Calu3 (cell line): ENCODE measurements at regions of chr3 and their contacts with region 1.

Region 1: DNA sequence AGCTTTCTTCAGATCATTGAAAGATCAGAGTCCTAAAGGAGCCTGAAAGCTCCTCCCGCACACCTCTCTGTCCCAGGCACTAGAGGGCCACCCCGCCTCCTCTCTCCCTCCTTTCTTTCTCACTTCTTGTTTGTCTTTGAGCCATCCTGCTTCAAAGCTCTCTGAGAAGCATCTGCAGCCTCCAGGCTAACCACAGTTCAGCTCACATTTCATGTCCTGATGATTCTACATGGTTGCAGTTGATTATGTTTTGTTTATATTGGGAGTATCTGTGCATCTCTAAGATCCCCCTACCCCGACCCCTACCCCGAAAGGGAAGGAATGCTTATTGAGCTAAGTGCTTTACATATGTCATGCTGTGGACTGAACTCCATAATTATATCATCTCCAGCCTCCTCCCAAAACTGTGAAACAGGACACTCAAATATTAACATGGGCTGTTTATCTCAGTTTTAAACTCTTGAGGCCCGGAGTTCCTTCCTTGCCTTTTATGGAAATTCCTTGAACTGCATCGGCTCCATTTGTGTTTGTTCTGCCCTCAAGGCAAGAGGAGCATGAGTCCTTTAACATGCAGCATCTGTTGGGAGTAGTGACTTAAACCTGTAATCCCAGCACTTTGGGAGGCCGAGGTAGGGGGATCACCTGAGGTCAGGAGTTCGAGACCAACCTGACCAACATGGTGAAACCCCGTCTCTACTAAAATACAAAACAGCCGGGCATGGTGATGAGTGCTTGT is 30.9 kb downstream of the MGLL start:
- DNase-seq: peak; percentile 75
- H3K4me3 Mint-ChIP-seq: no peak overlapping the region
- H3K27ac Mint-ChIP-seq: no peak overlapping the region
- H3K4me1 Mint-ChIP-seq: peaks cover 29% of the 10 kb centered on the region
- H3K27me3 Mint-ChIP-seq: no peaks in the 10 kb centered on the region
- CTCF ChIP-seq: no peak

Region 2: GRCh38 chr3:127208483-127209100 is 582.8 kb before region 1 on chr3:
- CTCF ChIA-PET with region 1: no interaction called
- intact Hi-C with region 1: no loop called
- DNase-seq: no peak
- H3K4me3 Mint-ChIP-seq: no peak overlapping the region
- H3K27ac Mint-ChIP-seq: no peak overlapping the region
- H3K4me1 Mint-ChIP-seq: no peaks in the 10 kb centered on the region
- H3K27me3 Mint-ChIP-seq: peaks cover 94% of the 10 kb centered on the region
- CTCF ChIP-seq: no peak

Region 3: GRCh38 chr3:127637546-127637945 is 153.8 kb before region 1 on chr3:
- CTCF ChIA-PET with region 1: no interaction called
- intact Hi-C with region 1: no loop called
- DNase-seq: no peak
- H3K4me3 Mint-ChIP-seq: no peak overlapping the region
- H3K27ac Mint-ChIP-seq: no peak overlapping the region
- H3K4me1 Mint-ChIP-seq: no peaks in the 10 kb centered on the region
- H3K27me3 Mint-ChIP-seq: no peaks in the 10 kb centered on the region
- CTCF ChIP-seq: no peak

Region 4: GRCh38 chr3:127817396-127817841 is 26.0 kb after region 1 on chr3:
- CTCF ChIA-PET with region 1: interaction called, 17 read pairs
- intact Hi-C with region 1: no loop called
- DNase-seq: peak; percentile 77
- H3K4me3 Mint-ChIP-seq: peak overlapping the region; percentile 39
- H3K27ac Mint-ChIP-seq: peak overlapping the region; percentile 84
- H3K4me1 Mint-ChIP-seq: peaks cover 83% of the 10 kb centered on the region
- H3K27me3 Mint-ChIP-seq: no peaks in the 10 kb centered on the region
- CTCF ChIP-seq: no peak

Region 5: GRCh38 chr3:127822698-127823425 is 31.5 kb after region 1 on chr3:
- CTCF ChIA-PET with region 1: interaction called, 17 read pairs
- intact Hi-C with region 1: no loop called
- DNase-seq: peak; percentile 52
- H3K4me3 Mint-ChIP-seq: peak overlapping the region; percentile 85
- H3K27ac Mint-ChIP-seq: peak overlapping the region; percentile 94
- H3K4me1 Mint-ChIP-seq: peaks cover 62% of the 10 kb centered on the region
- H3K27me3 Mint-ChIP-seq: peaks cover 13% of the 10 kb centered on the region
- CTCF ChIP-seq: no peak

Region 6: GRCh38 chr3:127984241-127984975 is 193.0 kb after region 1 on chr3:
- CTCF ChIA-PET with region 1: no interaction called
- intact Hi-C with region 1: no loop called
- DNase-seq: no peak
- H3K4me3 Mint-ChIP-seq: no peak overlapping the region
- H3K27ac Mint-ChIP-seq: no peak overlapping the region
- H3K4me1 Mint-ChIP-seq: no peaks in the 10 kb centered on the region
- H3K27me3 Mint-ChIP-seq: peaks cover 53% of the 10 kb centered on the region
- CTCF ChIP-seq: no peak

Region 7: DNA sequence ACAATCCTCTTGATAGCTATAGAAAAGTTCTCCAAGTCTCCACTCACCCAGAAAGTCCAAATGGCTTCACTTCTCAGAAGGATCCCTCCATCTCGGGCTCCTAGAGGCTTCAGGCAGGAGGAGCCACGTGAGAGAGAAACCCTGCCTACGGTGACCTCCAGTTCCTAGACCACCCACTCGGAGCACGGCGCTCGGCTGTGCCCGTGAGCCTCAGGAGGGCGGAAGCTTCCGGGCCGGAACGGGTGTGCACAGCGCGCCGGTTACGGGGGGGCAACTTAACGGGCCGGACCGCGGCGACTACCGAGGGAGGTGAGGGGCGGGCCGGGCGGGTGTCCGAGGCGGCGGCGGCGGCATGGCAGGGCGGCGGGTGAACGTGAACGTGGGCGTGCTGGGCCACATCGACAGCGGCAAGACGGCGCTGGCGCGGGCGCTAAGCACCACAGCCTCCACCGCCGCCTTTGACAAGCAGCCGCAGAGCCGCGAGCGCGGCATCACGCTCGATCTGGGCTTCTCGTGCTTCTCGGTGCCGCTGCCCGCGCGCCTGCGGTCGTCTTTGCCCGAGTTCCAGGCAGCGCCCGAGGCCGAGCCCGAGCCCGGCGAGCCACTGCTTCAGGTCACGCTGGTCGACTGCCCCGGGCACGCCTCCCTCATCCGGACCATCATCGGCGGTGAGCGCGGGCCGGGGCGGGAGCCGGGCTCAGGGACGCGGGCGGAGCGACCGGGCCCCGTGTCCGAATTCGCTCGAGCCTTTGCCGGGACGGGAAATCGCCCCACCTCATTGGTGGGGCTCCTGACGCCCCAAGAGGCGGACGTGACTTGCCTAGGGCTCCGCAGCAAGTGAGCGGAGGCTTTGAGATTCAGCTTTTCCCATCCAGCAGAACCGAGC is 362.0 kb after region 1 on chr3 and contains the start of gene EEFSEC:
- CTCF ChIA-PET with region 1: no interaction called
- intact Hi-C with region 1: no loop called
- DNase-seq: peak; percentile 97
- H3K4me3 Mint-ChIP-seq: peak within 1 kb of the TSS; percentile 88
- H3K27ac Mint-ChIP-seq: peak within 1 kb of the TSS; percentile 85
- H3K4me1 Mint-ChIP-seq: peaks cover 24% of the 10 kb centered on the region
- H3K27me3 Mint-ChIP-seq: no peaks in the 10 kb centered on the region
- CTCF ChIP-seq: no peak
- total RNA-seq, gene EEFSEC: 37.7 and 38.9 TPM in 2 replicates